ENCODE measurements at regions of chr3 and their contacts with region 1.

Region 1: GRCh38 chr3:151838583-151839312 is 24.8 kb downstream of the AADAC start:
- DNase-seq: peak in 1 of 3 donors; percentile 68
- ATAC-seq: peak; percentile 84
- H3K4me3 ChIP-seq: no peak overlapping the region
- H3K4me1 ChIP-seq: no peaks in the 10 kb centered on the region
- CTCF ChIP-seq: no peak

Region 2: GRCh38 chr3:151439652-151440129 is 399.1 kb before region 1 on chr3:
- intact Hi-C with region 1: loop called in 1 of 2 experiments (anchors 5 kb)
- DNase-seq: peak in 1 of 3 donors; percentile 72
- ATAC-seq: peak; percentile 77
- H3K4me3 ChIP-seq: no peak overlapping the region
- H3K4me1 ChIP-seq: no peaks in the 10 kb centered on the region
- CTCF ChIP-seq: peak; percentile 63

Region 3: GRCh38 chr3:151468284-151468917 is 370.3 kb before region 1 on chr3:
- intact Hi-C with region 1: loop called in 1 of 2 experiments (anchors 5 kb)
- DNase-seq: peak in 1 of 3 donors; percentile 76
- ATAC-seq: peak; percentile 76
- H3K4me3 ChIP-seq: no peak overlapping the region
- H3K4me1 ChIP-seq: no peaks in the 10 kb centered on the region
- CTCF ChIP-seq: peak; percentile 74

Region 4: GRCh38 chr3:151620071-151620470 is 218.7 kb before region 1 on chr3:
- intact Hi-C with region 1: no loop called
- DNase-seq: no peak
- ATAC-seq: no peak
- H3K4me3 ChIP-seq: no peak overlapping the region
- H3K4me1 ChIP-seq: no peaks in the 10 kb centered on the region
- CTCF ChIP-seq: no peak

Region 5: GRCh38 chr3:151770956-151771355 is 67.8 kb before region 1 on chr3:
- intact Hi-C with region 1: no loop called
- DNase-seq: peak; percentile 51 to 62 (median 55)
- ATAC-seq: peak; percentile 83
- H3K4me3 ChIP-seq: no peak overlapping the region
- H3K4me1 ChIP-seq: no peaks in the 10 kb centered on the region
- CTCF ChIP-seq: no peak

Region 6: GRCh38 chr3:151792411-151792810 is 46.3 kb before region 1 on chr3:
- intact Hi-C with region 1: loop called in 1 of 2 experiments (anchors 2 kb)
- DNase-seq: no peak
- ATAC-seq: no peak
- H3K4me3 ChIP-seq: no peak overlapping the region
- H3K4me1 ChIP-seq: no peaks in the 10 kb centered on the region
- CTCF ChIP-seq: no peak

Region 7: GRCh38 chr3:151925876-151926275 is 87.1 kb after region 1 on chr3:
- intact Hi-C with region 1: no loop called
- DNase-seq: no peak
- ATAC-seq: no peak
- H3K4me3 ChIP-seq: no peak overlapping the region
- H3K4me1 ChIP-seq: no peaks in the 10 kb centered on the region
- CTCF ChIP-seq: no peak

Region 8: DNA sequence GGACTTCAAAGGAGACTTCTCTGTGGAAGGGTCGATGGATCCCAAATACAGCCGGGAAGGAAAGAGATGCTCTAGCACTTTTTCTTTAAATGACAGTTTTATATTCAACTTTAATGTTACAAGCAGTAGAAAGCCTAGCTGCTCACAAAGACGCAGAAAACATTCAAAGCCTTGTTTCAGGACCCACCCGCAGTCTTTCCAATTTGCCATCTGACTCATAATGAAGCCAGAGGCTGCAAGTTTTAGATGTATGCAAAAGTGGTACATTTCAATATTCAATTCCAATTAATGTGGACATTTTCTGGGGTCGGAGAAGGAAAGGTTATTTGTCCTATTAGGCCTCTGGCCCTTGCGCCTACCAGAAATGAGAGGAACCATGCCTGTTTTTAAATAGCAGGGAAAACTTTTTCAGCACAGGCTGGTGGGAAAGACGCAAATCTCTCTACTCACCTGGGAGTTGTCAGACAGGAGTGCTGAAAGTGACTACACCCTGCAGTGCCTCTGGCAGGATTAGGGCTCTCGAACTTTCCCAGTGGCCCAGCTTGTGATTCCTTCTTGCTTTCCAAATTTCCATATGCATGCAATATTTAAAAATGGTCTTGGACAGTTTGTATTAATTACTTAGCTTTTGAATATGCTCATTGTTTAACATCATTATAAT is 312.6 kb after region 1 on chr3:
- intact Hi-C with region 1: no loop called
- DNase-seq: no peak
- ATAC-seq: no peak
- H3K4me3 ChIP-seq: no peak overlapping the region
- H3K4me1 ChIP-seq: peaks cover 5% of the 10 kb centered on the region
- CTCF ChIP-seq: no peak

Measured in mucosa of descending colon (tissue), 3 donors.